ENCODE measurements at regions of chrX and their contacts with region 1.

Region 1: GRCh38 chrX:133215747-133216146 is 2.4 kb downstream of the TFDP3 start:
- DNase-seq: peak; percentile 39
- H3K4me3 Mint-ChIP-seq: no peak overlapping the region
- H3K27ac Mint-ChIP-seq: no peak overlapping the region
- H3K4me1 Mint-ChIP-seq: no peaks in the 10 kb centered on the region
- H3K27me3 Mint-ChIP-seq: no peaks in the 10 kb centered on the region
- CTCF ChIP-seq: peak; percentile 33

Region 2: DNA sequence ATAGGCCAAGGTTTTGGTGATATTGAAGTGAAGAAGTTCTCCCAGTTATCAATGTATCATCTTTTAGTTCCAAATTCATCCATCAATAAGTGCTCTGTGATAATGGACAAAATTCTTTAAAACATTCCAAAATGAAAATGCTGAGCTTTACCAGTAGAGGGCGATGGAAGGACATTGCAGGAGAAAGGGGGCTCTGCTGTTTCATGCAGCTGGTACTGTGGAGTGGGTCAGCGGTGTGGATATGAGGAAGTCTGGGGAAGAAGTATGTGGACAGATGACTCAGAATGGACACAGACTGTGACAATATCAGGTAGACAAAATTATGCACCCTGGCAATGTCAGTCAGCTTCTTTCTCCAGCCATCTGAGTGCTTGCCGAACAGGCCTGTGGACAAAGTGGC is 210.7 kb before region 1 on chrX:
- CTCF ChIA-PET with region 1: no interaction called
- intact Hi-C with region 1: loop called (anchors 2 kb)
- DNase-seq: peak; percentile 2
- H3K4me3 Mint-ChIP-seq: no peak overlapping the region
- H3K27ac Mint-ChIP-seq: no peak overlapping the region
- H3K4me1 Mint-ChIP-seq: no peaks in the 10 kb centered on the region
- H3K27me3 Mint-ChIP-seq: no peaks in the 10 kb centered on the region
- CTCF ChIP-seq: peak; percentile 78

Region 3: DNA sequence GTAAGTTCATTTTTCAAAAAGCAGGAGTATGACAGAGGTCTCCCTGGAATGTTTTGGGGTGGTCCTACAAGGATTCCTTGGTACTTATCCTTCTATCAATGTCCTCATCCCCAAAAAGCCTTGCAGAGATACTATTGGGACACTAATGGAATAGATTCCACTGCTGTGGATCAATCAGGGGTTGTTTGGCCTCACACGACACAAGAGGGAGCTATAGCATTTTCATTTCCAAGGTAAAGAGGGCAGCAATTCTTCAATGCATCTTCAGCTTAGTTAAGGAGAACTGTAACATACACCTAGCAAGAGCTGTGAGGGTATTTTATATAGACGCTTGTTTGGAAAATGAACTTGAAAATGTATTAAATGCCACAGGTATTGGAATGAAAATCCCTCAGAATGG is 169.8 kb before region 1 on chrX:
- CTCF ChIA-PET with region 1: interaction called, 3 read pairs
- intact Hi-C with region 1: loop called (anchors 2 kb)
- DNase-seq: peak; percentile 27
- H3K4me3 Mint-ChIP-seq: no peak overlapping the region
- H3K27ac Mint-ChIP-seq: no peak overlapping the region
- H3K4me1 Mint-ChIP-seq: no peaks in the 10 kb centered on the region
- H3K27me3 Mint-ChIP-seq: no peaks in the 10 kb centered on the region
- CTCF ChIP-seq: peak; percentile 30

Region 4: GRCh38 chrX:133171962-133172708 is 43.6 kb before region 1 on chrX:
- CTCF ChIA-PET with region 1: no interaction called
- intact Hi-C with region 1: loop called (anchors 5 kb)
- DNase-seq: peak; percentile 40
- H3K4me3 Mint-ChIP-seq: no peak overlapping the region
- H3K27ac Mint-ChIP-seq: no peak overlapping the region
- H3K4me1 Mint-ChIP-seq: peaks cover 8% of the 10 kb centered on the region
- H3K27me3 Mint-ChIP-seq: no peaks in the 10 kb centered on the region
- CTCF ChIP-seq: peak; percentile 45